Activated CD4-positive, alpha-beta T cell treated with anti-CD3 and anti-CD28 coated beads, Interleukin-2, amount 10 ng/mL, durations not matched to agents 24 days and 14 days (primary cell): ENCODE measurements at regions of chr2 and their contacts with region 1.

Region 1: GRCh38 chr2:65300761-65301711 is 73.4 kb downstream of the ACTR2 start:
- DNase-seq: peak; percentile 91
- H3K4me3 Mint-ChIP-seq: peak overlapping the region; percentile 82
- H3K27ac Mint-ChIP-seq: peak overlapping the region; percentile 93
- H3K4me1 Mint-ChIP-seq: peaks cover 50% of the 10 kb centered on the region
- H3K27me3 Mint-ChIP-seq: peaks cover 30% of the 10 kb centered on the region

Region 2: GRCh38 chr2:65056215-65057053 is 244.6 kb before region 1 on chr2 and contains the start of gene CEP68:
- intact Hi-C with region 1: loop called (anchors 1 kb)
- DNase-seq: peak; percentile 99
- H3K4me3 Mint-ChIP-seq: peak within 1 kb of the TSS; percentile 97
- H3K27ac Mint-ChIP-seq: peak within 1 kb of the TSS; percentile 87
- H3K4me1 Mint-ChIP-seq: peaks cover 50% of the 10 kb centered on the region
- H3K27me3 Mint-ChIP-seq: peaks cover 2% of the 10 kb centered on the region
- total RNA-seq, gene CEP68: 4.4 and 4.9 TPM in 2 replicates

Region 3: DNA sequence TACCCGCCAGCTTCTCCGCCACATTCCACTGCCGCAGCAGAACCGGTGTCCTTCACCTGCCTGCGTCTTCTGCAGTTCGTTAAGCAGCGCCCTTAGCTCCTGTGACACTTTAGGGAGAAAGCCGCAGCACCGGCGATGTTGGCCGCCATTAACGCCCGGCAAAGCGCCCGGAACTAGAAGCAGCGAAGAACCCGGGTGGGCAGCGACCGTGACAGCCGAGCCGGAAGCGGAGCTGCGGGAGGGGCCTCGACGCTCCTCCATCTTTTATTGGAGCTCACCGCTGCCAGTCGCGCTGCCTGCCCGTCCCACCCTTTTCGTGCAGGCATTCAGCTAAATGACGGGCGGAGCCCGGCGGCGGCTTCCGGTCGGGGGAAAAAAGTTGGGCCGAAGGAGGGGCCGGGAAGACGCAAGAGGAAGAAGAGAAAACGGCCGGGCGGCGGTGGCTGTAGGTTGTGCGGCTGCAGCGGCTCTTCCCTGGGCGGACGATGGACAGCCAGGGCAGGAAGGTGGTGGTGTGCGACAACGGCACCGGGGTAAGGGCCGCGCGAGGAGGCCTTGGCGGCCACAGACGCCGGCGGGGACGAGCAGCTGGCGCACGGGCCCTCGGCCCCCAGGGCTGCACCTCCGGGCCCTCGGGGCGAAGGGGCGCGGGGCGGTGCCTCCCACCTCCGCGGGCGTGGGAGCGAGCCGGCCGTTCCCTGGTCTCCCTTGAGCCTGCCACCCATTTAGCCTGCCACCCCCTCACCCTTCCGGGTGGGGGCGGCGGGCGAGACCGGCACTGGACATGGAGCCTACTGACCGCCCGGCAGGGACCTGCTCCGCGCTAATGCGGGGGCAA is 73.4 kb before region 1 on chr2 and contains the start of gene ACTR2:
- intact Hi-C with region 1: loop called (anchors 2 kb)
- DNase-seq: peak; percentile 99
- H3K4me3 Mint-ChIP-seq: peak within 1 kb of the TSS; percentile 97
- H3K27ac Mint-ChIP-seq: peak within 1 kb of the TSS; percentile 98
- H3K4me1 Mint-ChIP-seq: peaks cover 28% of the 10 kb centered on the region
- H3K27me3 Mint-ChIP-seq: peaks cover 1% of the 10 kb centered on the region
- total RNA-seq, gene ACTR2: 298 TPM in 2 replicates

Region 4: GRCh38 chr2:65320042-65320725 is 19.1 kb after region 1 on chr2:
- intact Hi-C with region 1: loop called (anchors 1 kb)
- DNase-seq: no peak
- H3K4me3 Mint-ChIP-seq: no peak overlapping the region
- H3K27ac Mint-ChIP-seq: peak overlapping the region; percentile 42
- H3K4me1 Mint-ChIP-seq: peaks cover 16% of the 10 kb centered on the region
- H3K27me3 Mint-ChIP-seq: no peaks in the 10 kb centered on the region

Region 5: DNA sequence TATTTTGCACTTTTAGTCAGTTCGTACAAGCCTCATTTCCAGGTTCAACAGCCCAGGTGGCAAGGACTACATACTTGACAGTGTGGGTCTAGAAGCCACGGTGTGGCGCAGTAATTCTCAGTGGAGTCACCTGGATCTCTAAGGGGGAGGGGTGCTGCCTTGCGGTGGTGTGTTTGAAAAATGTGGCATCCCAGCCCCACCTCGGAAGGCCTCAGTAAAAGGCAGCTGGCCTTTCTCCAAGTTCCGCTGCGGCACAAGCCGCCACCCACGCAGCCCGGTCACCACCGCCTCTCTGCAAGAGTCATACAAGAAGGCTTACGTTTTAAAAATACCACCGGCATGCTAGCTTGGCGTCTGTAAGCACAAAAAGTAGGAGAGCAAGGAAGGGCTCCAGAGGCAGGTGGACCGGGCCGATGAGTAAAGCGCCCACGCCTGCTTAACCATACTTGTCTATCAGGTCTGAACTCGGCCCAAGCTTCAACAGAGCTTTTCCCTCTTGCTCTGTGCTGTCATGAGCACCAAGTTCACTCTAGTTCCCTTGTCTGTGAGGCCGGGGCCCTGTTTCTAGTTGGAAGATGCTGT is 81.8 kb after region 1 on chr2:
- intact Hi-C with region 1: loop called (anchors 2 kb)
- DNase-seq: peak; percentile 89
- H3K4me3 Mint-ChIP-seq: peak overlapping the region; percentile 42
- H3K27ac Mint-ChIP-seq: peak overlapping the region; percentile 68
- H3K4me1 Mint-ChIP-seq: peaks cover 40% of the 10 kb centered on the region
- H3K27me3 Mint-ChIP-seq: peaks cover 8% of the 10 kb centered on the region